Heart right ventricle (tissue), 16 donors: ENCODE measurements at regions of chr6 and their contacts with region 1.

Region 1: DNA sequence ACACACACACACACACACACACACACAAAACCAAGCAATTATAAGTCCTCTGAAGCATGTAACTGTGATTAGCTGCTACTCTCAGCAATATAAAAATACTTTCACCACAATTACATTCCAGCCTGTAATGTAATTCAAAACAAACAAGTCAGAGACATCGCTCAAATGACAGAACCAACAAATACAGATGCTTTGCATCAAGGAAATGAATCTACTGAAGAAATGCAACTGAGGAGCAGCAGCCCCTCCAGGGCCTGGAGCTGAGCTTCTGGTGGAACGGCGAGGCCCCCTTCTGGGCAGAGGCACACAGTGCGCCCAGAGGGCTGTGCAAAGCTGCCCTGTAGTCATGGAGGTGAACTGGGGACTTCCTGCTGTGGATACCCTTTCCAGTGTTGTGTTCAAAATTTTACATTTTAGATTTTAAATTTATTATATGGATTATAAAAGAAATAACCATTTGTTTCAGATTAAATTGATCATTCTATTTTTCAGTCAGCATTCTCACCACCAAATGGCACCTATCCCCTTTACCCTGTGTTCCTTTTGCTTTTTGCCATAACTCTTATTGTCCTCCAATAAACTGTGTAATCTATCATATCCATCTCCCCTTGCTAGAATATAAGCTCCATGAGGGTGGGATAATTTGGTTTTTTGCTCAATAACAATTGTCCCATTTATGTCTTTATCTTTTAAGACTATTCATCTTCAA is 23.2 kb downstream of the ADAT2 start:
- DNase-seq: peak; percentile 53 to 71
- ATAC-seq: peak; percentile 92 to 96 (median 95)
- H3K4me3 ChIP-seq: no peak overlapping the region
- H3K27ac ChIP-seq: no peak overlapping the region
- H3K4me1 ChIP-seq: no peaks in the 10 kb centered on the region
- H3K27me3 ChIP-seq: no peaks in the 10 kb centered on the region
- CTCF ChIP-seq: peak; percentile 77 to 99 (median 93)

Region 2: GRCh38 chr6:142378138-142378875 is 1049.0 kb before region 1 on chr6:
- intact Hi-C with region 1: no loop called
- DNase-seq: peak in 1 of 2 donors; percentile 19
- ATAC-seq: peak in 7 of 8 donors; percentile 74 to 90 (median 87)
- H3K4me3 ChIP-seq: no peak overlapping the region
- H3K27ac ChIP-seq: peak overlapping the region in 5 of 10 donors; percentile 2 to 41 (median 18)
- H3K4me1 ChIP-seq: peaks cover 0 to 41% (median 19%) of the 10 kb centered on the region in 9 donors
- H3K27me3 ChIP-seq: no peaks in the 10 kb centered on the region
- CTCF ChIP-seq: no peak

Region 3: GRCh38 chr6:142566628-142567396 is 860.5 kb before region 1 on chr6:
- intact Hi-C with region 1: loop called in 4 of 10 experiments (anchors 2 to 10 kb)
- DNase-seq: peak in 1 of 2 donors; percentile 42
- ATAC-seq: peak in 4 of 8 donors; percentile 41 to 61 (median 57)
- H3K4me3 ChIP-seq: no peak overlapping the region
- H3K27ac ChIP-seq: no peak overlapping the region
- H3K4me1 ChIP-seq: peaks cover 0 to 30% (median 9%) of the 10 kb centered on the region in 9 donors
- H3K27me3 ChIP-seq: no peaks in the 10 kb centered on the region
- CTCF ChIP-seq: peak; percentile 66 to 90 (median 87)

Region 4: GRCh38 chr6:142692942-142693341 is 734.3 kb before region 1 on chr6:
- intact Hi-C with region 1: loop called (anchors 1 to 5 kb)
- DNase-seq: peak; percentile 40 to 71
- ATAC-seq: peak; percentile 69 to 85 (median 77)
- H3K4me3 ChIP-seq: no peak overlapping the region
- H3K27ac ChIP-seq: peak overlapping the region in 3 of 10 donors; percentile 23 to 51 (median 29)
- H3K4me1 ChIP-seq: peaks cover 0 to 34% (median 5%) of the 10 kb centered on the region in 9 donors
- H3K27me3 ChIP-seq: no peaks in the 10 kb centered on the region
- CTCF ChIP-seq: peak; percentile 85 to 98 (median 91)

Region 5: GRCh38 chr6:142845624-142846458 is 581.4 kb before region 1 on chr6:
- intact Hi-C with region 1: no loop called
- DNase-seq: peak; percentile 92 to 93
- ATAC-seq: peak; percentile 91 to 97 (median 94)
- H3K4me3 ChIP-seq: peak overlapping the region in 9 of 10 donors; percentile 1 to 51 (median 37)
- H3K27ac ChIP-seq: peak overlapping the region; percentile 69 to 92 (median 80)
- H3K4me1 ChIP-seq: peaks cover 25 to 98% (median 88%) of the 10 kb centered on the region in 9 donors
- H3K27me3 ChIP-seq: no peaks in the 10 kb centered on the region
- CTCF ChIP-seq: peak in 2 of 9 donors; percentile 26 to 38

Region 6: DNA sequence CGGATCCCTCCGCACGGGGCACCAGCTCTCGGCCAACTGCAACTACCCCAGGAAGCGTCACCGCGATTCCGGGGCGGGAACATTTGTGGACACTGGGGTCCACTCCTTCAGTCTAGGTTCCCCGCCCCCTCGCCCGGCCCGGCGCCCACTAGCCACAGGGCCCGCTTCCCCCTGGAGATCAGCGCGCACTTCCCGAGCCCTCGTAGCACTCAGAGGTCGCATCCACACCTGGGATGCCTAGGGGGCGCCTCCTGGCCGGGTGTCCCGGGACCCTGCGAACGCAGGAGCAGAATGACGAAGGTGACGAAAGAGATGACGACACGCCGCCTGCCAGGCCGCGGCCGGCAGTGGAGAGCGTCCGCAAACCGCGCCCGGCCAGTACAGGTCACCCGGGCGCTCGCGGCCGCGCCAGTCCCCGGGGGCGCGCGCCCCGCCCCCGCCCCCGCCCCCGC is 366.9 kb before region 1 on chr6:
- intact Hi-C with region 1: loop called in 1 of 10 experiments (anchors 10 kb)
- DNase-seq: peak; percentile 81 to 83
- ATAC-seq: peak; percentile 90 to 95 (median 92)
- H3K4me3 ChIP-seq: peak overlapping the region; percentile 77 to 96 (median 83)
- H3K27ac ChIP-seq: peak overlapping the region; percentile 90 to 97 (median 94)
- H3K4me1 ChIP-seq: peaks cover 0 to 30% (median 21%) of the 10 kb centered on the region in 9 donors
- H3K27me3 ChIP-seq: no peaks in the 10 kb centered on the region
- CTCF ChIP-seq: peak in 5 of 9 donors; percentile 6 to 35 (median 18)

Region 7: GRCh38 chr6:143232849-143233248 is 194.4 kb before region 1 on chr6:
- intact Hi-C with region 1: loop called in 3 of 10 experiments (anchors 10 kb)
- DNase-seq: peak in 1 of 2 donors; percentile 27
- ATAC-seq: no peak
- H3K4me3 ChIP-seq: no peak overlapping the region
- H3K27ac ChIP-seq: no peak overlapping the region
- H3K4me1 ChIP-seq: peaks cover 0 to 4% (median 0%) of the 10 kb centered on the region in 9 donors
- H3K27me3 ChIP-seq: no peaks in the 10 kb centered on the region
- CTCF ChIP-seq: peak in 7 of 9 donors; percentile 33 to 52 (median 44)